Left cardiac atrium (tissue), 4 donors: ENCODE measurements at regions of chr4 and their contacts with region 1.

Region 1: DNA sequence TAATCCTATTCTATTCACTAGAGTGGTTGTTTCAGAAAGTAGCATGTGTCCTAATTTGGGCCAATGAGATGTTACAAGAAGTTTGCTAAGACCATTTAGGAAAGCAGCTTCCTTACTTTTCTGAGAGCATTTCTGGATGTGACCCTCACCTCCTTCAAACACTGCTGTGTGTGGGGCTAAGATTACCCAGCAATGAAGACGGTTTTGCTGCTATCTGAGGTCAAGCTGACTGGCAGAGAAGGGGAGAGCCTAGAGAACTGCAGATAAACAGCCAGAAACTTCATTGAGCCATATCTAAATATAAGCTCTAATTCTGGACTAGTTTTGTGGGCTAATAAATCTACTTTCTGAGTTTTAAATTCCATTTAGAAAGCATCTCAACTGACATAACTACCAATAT is 36.4 kb downstream of the ZAR1 start:
- DNase-seq: no peak
- ATAC-seq: no peak

Region 2: DNA sequence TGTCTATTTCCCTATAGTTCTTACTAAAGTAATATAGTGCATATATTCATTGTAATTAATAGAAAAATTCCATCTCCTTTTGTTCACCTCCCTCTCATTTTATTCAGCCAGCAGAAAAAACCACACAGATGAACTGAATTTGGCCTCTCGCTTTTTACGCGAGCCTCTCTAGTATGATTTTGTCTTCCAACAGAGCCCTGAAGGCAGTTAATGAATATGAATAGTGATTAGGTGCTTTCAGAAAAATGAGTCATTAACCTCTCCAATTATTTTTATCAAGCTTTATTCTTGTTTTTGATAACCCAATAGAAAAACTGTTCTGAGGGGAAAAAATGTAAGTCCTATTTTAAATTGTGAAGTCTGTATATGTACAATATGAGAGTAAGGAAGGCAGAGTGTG is 37.7 kb after region 1 on chr4:
- intact Hi-C with region 1: loop called in 1 of 2 experiments (anchors 5 kb)
- DNase-seq: no peak
- ATAC-seq: no peak

Region 3: DNA sequence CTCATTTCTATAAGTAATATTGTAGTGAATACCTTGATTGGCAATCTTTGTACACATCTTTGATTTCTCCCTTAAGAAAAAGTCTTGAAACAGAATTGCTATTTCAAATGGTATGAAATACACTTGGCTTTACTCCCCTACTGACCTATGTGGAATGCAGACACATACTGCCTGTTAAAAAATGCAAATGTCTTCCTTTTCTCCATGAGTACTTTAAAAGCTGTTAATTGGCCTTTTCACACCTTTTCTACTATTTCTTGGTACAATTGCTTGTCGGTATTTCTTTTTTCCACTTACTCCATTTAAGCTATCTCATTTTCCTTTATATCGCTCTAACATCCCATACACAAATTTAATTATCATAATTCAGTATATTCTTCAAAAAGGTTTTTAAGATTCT is 166.5 kb after region 1 on chr4:
- intact Hi-C with region 1: no loop called
- DNase-seq: no peak
- ATAC-seq: no peak